ENCODE measurements at regions of chr2 and their contacts with region 1.

Region 1: DNA sequence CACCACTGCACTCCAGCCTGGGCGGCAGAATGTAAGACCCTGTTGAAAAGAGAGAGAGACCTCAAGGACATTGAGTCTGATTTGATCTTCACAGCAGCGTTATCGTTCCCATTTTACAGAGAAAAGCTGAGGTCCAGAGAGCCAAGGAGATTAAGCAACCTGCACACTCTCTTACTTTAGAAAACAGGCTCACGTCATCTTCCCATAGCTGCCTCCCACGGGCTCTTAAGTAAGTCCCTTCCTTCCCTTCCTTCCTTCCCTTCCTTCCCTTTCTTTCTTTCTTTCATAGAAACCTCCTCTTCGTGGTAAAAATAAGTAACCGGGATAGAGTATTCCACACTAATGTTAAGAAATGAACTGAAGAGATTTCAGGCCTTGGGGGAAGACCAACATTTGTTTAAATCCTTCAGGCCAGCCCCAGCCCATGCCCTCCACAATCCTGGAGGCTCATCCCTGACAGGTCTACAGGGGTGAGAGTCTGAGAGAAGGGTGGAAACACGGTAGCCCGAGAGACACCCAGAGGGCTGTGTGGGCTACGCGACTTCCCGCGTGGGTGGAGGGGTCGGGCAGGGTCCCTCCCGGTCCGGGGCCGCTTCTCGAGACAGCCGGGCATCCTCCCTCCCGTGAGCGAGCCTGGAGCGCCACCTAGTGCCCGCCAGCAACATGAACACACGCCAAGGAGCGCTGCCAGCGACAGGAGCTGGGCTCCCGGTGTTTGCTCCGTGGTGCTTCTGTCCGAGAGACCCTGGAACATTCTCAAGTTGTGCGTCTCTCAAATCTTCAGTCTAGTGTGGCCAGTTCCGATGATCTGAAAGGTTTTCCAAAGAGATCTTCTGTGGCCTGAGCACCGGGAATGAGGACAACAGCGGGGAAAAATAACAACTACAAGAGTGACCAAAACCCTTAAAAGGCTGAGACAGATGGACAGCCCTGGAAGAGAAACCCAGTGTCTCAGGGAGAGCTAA is 160.3 kb downstream of the INO80D start:
- DNase-seq: peak; percentile 58
- H3K4me3 ChIP-seq: no peak overlapping the region
- H3K27ac ChIP-seq: no peak overlapping the region
- H3K4me1 ChIP-seq: no peaks in the 10 kb centered on the region
- CTCF ChIP-seq: peak; percentile 90

Region 2: DNA sequence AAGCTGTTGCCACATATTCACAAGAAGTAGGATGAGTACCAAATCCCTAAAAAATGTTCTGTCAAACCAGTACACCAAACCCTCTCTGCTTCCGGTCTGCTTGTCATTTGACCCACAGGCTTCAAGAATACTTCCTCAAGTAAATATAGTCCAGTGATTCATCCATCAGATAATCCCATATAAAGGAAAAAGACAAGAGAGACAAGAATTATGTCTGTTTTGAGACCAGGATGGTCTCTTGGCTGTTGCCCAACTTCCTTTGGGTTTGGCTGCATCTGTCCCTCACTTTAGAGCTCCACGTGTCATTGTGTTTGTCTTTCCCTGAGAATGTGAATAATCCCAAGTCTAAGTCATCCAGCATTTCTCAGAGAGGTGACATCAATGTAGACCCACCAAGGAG is 334.9 kb before region 1 on chr2:
- CTCF ChIA-PET with region 1: no interaction called
- POLR2A ChIA-PET with region 1: no interaction called
- intact Hi-C with region 1: no loop called
- DNase-seq: no peak
- H3K4me3 ChIP-seq: no peak overlapping the region
- H3K27ac ChIP-seq: no peak overlapping the region
- H3K4me1 ChIP-seq: no peaks in the 10 kb centered on the region
- CTCF ChIP-seq: no peak

Region 3: GRCh38 chr2:205776139-205776538 is 149.5 kb before region 1 on chr2:
- CTCF ChIA-PET with region 1: no interaction called
- POLR2A ChIA-PET with region 1: no interaction called
- intact Hi-C with region 1: loop called (anchors 1 kb)
- DNase-seq: peak; percentile 33
- H3K4me3 ChIP-seq: no peak overlapping the region
- H3K27ac ChIP-seq: no peak overlapping the region
- H3K4me1 ChIP-seq: peaks cover 6% of the 10 kb centered on the region
- CTCF ChIP-seq: peak; percentile 82

Region 4: GRCh38 chr2:205947621-205948495 is 22.2 kb after region 1 on chr2:
- CTCF ChIA-PET with region 1: no interaction called
- POLR2A ChIA-PET with region 1: no interaction called
- intact Hi-C with region 1: no loop called
- DNase-seq: peak; percentile 37
- H3K4me3 ChIP-seq: no peak overlapping the region
- H3K27ac ChIP-seq: no peak overlapping the region
- H3K4me1 ChIP-seq: no peaks in the 10 kb centered on the region
- CTCF ChIP-seq: peak; percentile 97

Region 5: DNA sequence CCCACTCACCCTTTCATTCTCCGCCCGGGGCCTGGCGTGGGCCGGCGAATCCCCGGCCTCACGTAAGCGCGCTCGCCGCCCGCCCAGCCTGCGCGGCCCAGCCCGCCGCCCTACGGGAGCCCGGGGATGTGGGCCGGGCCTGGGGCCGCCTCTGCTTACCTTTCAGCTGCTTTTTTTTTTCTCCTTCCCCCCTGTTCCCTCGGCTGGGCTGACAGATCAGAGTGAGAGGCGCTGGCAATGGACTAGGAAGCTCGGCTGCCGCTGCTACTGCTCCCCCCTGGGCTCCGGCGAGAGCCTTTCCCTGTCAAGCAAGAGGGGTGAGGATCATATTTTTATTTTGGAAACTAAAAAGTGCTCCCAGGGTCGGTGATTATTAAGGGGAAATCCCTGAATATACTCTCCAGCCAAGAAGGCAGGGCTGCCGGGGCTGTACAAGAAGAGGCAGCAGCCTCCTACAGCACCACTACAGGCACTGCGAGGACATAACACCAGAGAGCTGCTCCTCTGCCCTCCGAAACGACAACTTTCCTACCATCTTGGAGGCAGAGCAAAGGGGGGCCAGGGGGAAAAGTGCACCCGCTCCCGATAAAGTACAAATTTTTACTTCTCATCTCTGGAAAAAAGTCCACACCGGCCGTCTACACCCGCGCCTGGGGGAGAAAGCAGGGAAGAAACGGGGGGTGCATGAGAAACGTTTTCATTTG is 160.2 kb after region 1 on chr2 and contains the start of gene INO80D:
- CTCF ChIA-PET with region 1: no interaction called
- POLR2A ChIA-PET with region 1: no interaction called
- intact Hi-C with region 1: no loop called
- DNase-seq: peak; percentile 89
- H3K4me3 ChIP-seq: peak within 1 kb of the TSS; percentile 92
- H3K27ac ChIP-seq: peak within 1 kb of the TSS; percentile 94
- H3K4me1 ChIP-seq: peaks cover 29% of the 10 kb centered on the region
- CTCF ChIP-seq: peak; percentile 75
- total RNA-seq, gene INO80D: 8.2 and 14.2 TPM in 2 replicates